Heart left ventricle (tissue), 16 donors: ENCODE measurements at regions of chr6 and their contacts with region 1.

Region 1: GRCh38 chr6:168132531-168133167 is 53.6 kb upstream of the FRMD1 start:
- DNase-seq: peak in 4 of 5 donors; percentile 69 to 76 (median 74)
- ATAC-seq: peak; percentile 72 to 88 (median 81)
- H3K4me3 ChIP-seq: peak overlapping the region in 10 of 12 donors; percentile 1 to 46 (median 36)
- H3K27ac ChIP-seq: peak overlapping the region in 8 of 12 donors; percentile 0 to 56 (median 38)
- H3K4me1 ChIP-seq: peaks cover 0 to 23% (median 17%) of the 10 kb centered on the region in 12 donors
- H3K27me3 ChIP-seq: no peaks in the 10 kb centered on the region
- CTCF ChIP-seq: peak; percentile 40 to 80 (median 64)
- POLR2A ChIP-seq: no peak

Region 2: GRCh38 chr6:167479901-167480648 is 652.6 kb before region 1 on chr6:
- intact Hi-C with region 1: loop called in 3 of 10 experiments (anchors 5 to 10 kb)
- DNase-seq: peak in 1 of 5 donors; percentile 38
- ATAC-seq: peak; percentile 50 to 80 (median 67)
- H3K4me3 ChIP-seq: no peak overlapping the region
- H3K27ac ChIP-seq: peak overlapping the region in 10 of 12 donors; percentile 26 to 68 (median 51)
- H3K4me1 ChIP-seq: peaks cover 0 to 23% (median 7%) of the 10 kb centered on the region in 12 donors
- H3K27me3 ChIP-seq: no peaks in the 10 kb centered on the region
- CTCF ChIP-seq: no peak
- POLR2A ChIP-seq: no peak

Region 3: GRCh38 chr6:167485186-167485978 is 647.3 kb before region 1 on chr6:
- intact Hi-C with region 1: loop called in 2 of 10 experiments (anchors 5 to 10 kb)
- DNase-seq: peak in 1 of 5 donors; percentile 51
- ATAC-seq: peak; percentile 65 to 91 (median 80)
- H3K4me3 ChIP-seq: no peak overlapping the region
- H3K27ac ChIP-seq: no peak overlapping the region
- H3K4me1 ChIP-seq: peaks cover 0 to 13% (median 0%) of the 10 kb centered on the region in 12 donors
- H3K27me3 ChIP-seq: no peaks in the 10 kb centered on the region
- CTCF ChIP-seq: peak; percentile 38 to 76 (median 63)
- POLR2A ChIP-seq: no peak

Region 4: DNA sequence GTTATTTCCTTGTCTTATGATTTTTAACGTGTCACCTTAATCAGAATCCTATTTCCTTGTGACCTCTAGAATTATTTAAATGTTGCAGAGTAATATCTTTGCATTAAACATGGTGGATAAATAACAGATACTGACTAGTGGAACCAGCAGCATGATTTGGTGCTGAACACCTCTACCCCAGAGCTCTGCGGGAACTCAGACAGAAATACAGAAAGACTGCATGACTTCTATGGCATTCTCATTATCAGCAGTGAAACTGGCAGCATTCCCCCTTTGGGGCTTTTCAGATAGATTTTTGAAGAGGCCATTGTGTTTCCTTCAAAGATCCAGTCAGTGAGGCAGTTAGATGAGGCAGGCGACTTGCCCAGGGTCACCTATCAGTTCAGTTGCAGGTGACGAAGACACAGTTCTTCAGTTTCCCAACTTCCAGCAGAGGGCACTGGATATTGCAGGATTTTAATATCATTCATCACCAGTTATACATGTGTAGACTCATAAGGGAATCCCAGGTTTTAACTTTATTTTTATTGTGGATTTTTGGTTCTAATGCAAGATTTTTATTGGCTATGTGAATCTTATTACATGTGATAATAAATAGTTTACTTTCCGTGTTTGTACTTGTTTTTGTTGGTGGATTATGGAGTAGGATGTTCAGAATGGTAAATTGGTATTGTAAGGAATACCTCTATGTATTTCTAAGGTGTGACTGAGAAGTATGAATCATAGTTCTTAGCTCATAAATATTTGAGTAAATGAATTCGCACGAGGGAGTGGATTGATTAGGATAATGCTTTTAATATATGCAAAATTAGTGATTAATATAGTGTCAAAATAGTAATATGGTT is 224.6 kb before region 1 on chr6:
- intact Hi-C with region 1: loop called (anchors 1 to 5 kb)
- DNase-seq: no peak
- ATAC-seq: peak in 2 of 4 donors; percentile 61 to 64
- H3K4me3 ChIP-seq: peak overlapping the region in 1 of 12 donors; percentile 12
- H3K27ac ChIP-seq: peak overlapping the region in 1 of 12 donors; percentile 62
- H3K4me1 ChIP-seq: peaks cover 0 to 22% (median 9%) of the 10 kb centered on the region in 12 donors
- H3K27me3 ChIP-seq: no peaks in the 10 kb centered on the region
- CTCF ChIP-seq: peak; percentile 33 to 77 (median 62)
- POLR2A ChIP-seq: no peak

Region 5: GRCh38 chr6:168016721-168017525 is 115.7 kb before region 1 on chr6:
- intact Hi-C with region 1: no loop called
- DNase-seq: peak in 1 of 5 donors; percentile 9
- ATAC-seq: peak in 1 of 4 donors; percentile 26
- H3K4me3 ChIP-seq: no peak overlapping the region
- H3K27ac ChIP-seq: no peak overlapping the region
- H3K4me1 ChIP-seq: peaks cover 0 to 30% (median 6%) of the 10 kb centered on the region in 12 donors
- H3K27me3 ChIP-seq: no peaks in the 10 kb centered on the region
- CTCF ChIP-seq: no peak
- POLR2A ChIP-seq: no peak

Region 6: DNA sequence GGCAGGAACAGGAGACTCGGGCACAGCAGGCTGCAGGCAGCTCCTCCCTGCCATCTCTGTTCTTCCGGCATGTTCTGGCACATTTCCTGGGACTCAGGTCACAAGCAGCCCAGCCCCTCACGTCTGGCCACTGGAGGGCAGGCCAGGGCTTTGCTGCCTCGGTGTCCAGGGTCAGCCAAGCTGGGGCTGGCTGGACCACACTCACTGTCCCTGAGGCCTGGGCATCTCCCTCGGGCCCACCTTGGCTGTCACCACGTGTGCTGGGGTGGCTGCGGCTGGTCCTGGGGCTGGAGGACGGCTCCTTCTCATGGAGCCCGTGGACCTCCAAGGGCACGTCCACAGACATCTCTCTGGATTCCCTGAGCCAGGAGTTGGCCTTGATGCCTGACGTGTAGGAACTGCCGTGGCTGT is 72.1 kb before region 1 on chr6:
- intact Hi-C with region 1: loop called (anchors 1 to 5 kb)
- DNase-seq: peak; percentile 74 to 82 (median 80)
- ATAC-seq: peak; percentile 59 to 88 (median 77)
- H3K4me3 ChIP-seq: no peak overlapping the region
- H3K27ac ChIP-seq: no peak overlapping the region
- H3K4me1 ChIP-seq: peaks cover 3 to 26% (median 9%) of the 10 kb centered on the region in 12 donors
- H3K27me3 ChIP-seq: no peaks in the 10 kb centered on the region
- CTCF ChIP-seq: peak; percentile 42 to 79 (median 68)
- POLR2A ChIP-seq: no peak